Heart right ventricle (tissue), 16 donors: ENCODE measurements at regions of chr15 and their contacts with region 1.

Region 1: DNA sequence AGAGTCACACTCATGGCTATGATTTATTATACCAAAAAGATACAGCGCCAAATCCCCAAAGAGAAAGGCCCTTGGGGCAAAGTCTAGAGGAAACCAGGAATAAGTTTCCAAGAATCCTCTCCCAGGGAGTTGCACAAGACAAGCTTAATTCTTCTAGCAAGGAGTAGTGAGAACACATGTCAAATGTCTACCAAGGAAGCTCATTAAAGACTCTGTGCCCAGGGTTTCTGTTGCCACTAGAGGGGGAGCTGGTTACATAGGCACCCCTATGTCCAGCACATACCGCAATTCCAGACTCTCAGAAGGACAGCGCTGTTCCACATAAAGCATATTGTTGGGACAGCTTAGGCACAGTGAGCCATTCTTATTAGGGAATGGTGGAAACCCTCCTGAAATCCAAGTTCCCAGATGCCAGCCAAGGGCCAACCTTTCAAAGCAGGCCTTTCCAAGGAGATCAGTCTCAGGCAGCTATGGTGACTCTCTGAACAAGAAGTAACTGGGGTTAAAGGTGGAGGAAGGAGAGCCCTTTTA is 194.2 kb downstream of the UACA start:
- DNase-seq: peak in 1 of 2 donors; percentile 42
- ATAC-seq: peak; percentile 75 to 89 (median 88)
- H3K4me3 ChIP-seq: no peak overlapping the region
- H3K27ac ChIP-seq: peak overlapping the region in 2 of 10 donors; percentile 7 to 11
- H3K4me1 ChIP-seq: peaks cover 0 to 16% (median 4%) of the 10 kb centered on the region in 9 donors
- H3K27me3 ChIP-seq: peaks cover 0 to 10% (median 0%) of the 10 kb centered on the region in 7 donors
- CTCF ChIP-seq: peak; percentile 41 to 75 (median 60)

Region 2: DNA sequence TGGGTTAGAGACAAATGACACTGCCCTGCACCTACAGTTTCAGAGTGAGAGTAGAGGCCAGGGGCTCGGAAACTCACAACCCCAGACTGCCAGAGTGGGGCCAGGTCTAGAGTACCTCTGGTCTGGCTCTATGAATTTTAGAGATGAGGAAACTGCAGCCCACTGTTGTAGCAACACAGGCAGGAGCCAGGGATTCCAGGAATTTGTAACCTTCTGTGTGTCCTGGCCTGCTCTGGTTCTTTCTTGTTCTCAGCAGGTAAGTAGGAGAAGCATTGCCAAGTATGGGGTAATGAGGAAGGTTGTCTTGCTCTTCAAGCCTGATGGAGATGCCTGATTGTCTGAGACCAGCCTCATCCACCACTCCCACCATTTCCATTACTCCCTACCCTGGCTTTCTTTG is 27.6 kb before region 1 on chr15:
- intact Hi-C with region 1: no loop called
- DNase-seq: no peak
- ATAC-seq: no peak
- H3K4me3 ChIP-seq: no peak overlapping the region
- H3K27ac ChIP-seq: no peak overlapping the region
- H3K4me1 ChIP-seq: no peaks in the 10 kb centered on the region
- H3K27me3 ChIP-seq: peaks cover 0 to 36% (median 15%) of the 10 kb centered on the region in 7 donors
- CTCF ChIP-seq: no peak

Region 3: DNA sequence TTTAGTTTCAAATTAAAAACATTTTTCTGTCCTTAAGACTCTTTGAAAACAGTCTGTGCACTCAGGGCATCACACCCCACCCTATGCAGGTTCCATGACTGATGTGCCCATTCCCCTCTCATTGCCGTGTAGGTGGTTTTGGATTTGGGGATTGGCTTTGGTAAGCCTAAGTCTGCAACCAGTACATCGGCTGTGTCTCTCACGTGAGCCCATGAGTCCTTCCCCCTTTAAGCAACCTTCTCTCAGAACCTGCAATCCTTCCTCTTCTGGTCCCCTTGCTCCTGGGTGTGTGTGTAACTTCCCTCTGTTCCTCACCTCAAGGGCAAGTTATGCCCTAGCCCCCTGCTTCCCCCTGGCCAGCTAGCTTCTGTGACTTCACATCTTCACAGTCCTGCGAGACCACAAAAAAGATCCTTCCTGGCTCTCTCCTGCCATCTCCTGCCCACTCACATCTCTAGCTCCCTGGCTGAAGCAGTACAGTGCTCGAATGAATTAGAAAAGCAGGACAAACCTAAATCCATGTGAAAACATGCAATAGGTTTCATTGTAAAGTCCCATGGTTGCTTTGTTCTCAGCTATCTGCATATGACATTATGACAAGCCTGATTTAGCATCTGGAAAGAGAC is 67.5 kb after region 1 on chr15:
- intact Hi-C with region 1: loop called in 3 of 10 experiments (anchors 10 kb)
- DNase-seq: no peak
- ATAC-seq: peak in 1 of 8 donors; percentile 51
- H3K4me3 ChIP-seq: no peak overlapping the region
- H3K27ac ChIP-seq: no peak overlapping the region
- H3K4me1 ChIP-seq: peaks cover 0 to 11% (median 4%) of the 10 kb centered on the region in 9 donors
- H3K27me3 ChIP-seq: no peaks in the 10 kb centered on the region
- CTCF ChIP-seq: peak in 6 of 9 donors; percentile 21 to 48 (median 30)

Region 4: GRCh38 chr15:70650567-70651302 is 81.6 kb after region 1 on chr15:
- intact Hi-C with region 1: no loop called
- DNase-seq: no peak
- ATAC-seq: no peak
- H3K4me3 ChIP-seq: no peak overlapping the region
- H3K27ac ChIP-seq: peak overlapping the region in 1 of 10 donors; percentile 9
- H3K4me1 ChIP-seq: peaks cover 0 to 7% (median 0%) of the 10 kb centered on the region in 9 donors
- H3K27me3 ChIP-seq: no peaks in the 10 kb centered on the region
- CTCF ChIP-seq: no peak

Region 5: DNA sequence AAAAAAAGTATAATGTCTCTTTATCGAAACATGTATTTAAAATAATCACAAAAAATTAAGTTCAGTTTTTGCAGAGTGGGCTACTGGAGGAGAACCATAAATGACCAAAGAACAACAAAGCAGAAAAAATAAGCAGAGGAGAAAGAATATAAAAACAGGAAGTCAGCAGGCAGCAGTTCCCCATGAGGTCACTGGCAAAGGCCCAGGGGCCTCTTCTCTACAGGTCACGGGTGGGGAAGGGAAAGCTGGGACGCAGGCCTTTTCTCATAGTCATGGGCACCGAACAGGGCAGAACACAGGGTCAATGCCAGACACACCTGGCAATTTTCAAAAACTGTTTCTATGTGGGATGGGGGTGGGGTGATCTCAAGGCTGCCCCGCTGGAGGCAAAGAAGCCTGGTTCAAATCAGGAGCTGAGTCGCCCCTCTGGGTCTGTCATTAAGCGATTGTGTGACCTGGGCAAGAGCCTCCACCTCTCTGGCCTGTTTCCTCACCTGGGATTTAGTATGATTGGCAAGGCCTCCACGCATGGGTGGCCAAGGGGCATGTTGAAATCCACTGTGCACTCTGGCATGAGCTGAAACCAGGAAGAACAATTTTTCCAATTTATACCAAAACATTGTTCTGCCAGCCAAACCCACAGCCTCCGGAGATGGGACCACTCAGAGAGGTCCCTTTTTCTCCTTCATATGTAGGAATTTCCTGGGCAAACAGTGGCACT is 238.0 kb after region 1 on chr15:
- intact Hi-C with region 1: loop called in 8 of 10 experiments (anchors 5 to 10 kb)
- DNase-seq: peak; percentile 49 to 62
- ATAC-seq: peak in 6 of 8 donors; percentile 19 to 63 (median 55)
- H3K4me3 ChIP-seq: no peak overlapping the region
- H3K27ac ChIP-seq: peak overlapping the region in 5 of 10 donors; percentile 14 to 74 (median 50)
- H3K4me1 ChIP-seq: peaks cover 0 to 38% (median 12%) of the 10 kb centered on the region in 9 donors
- H3K27me3 ChIP-seq: no peaks in the 10 kb centered on the region
- CTCF ChIP-seq: no peak

Region 6: GRCh38 chr15:70815644-70816043 is 246.5 kb after region 1 on chr15:
- intact Hi-C with region 1: loop called in 8 of 10 experiments (anchors 5 to 10 kb)
- DNase-seq: no peak
- ATAC-seq: no peak
- H3K4me3 ChIP-seq: no peak overlapping the region
- H3K27ac ChIP-seq: no peak overlapping the region
- H3K4me1 ChIP-seq: peaks cover 0 to 10% (median 0%) of the 10 kb centered on the region in 9 donors
- H3K27me3 ChIP-seq: no peaks in the 10 kb centered on the region
- CTCF ChIP-seq: no peak